ENCODE measurements at regions of chr18 and their contacts with region 1.

Region 1: GRCh38 chr18:74353169-74353775 is 37.6 kb downstream of the C18orf63 start:
- DNase-seq: peak; percentile 77
- H3K4me3 Mint-ChIP-seq: no peak overlapping the region
- H3K27ac Mint-ChIP-seq: no peak overlapping the region
- H3K4me1 Mint-ChIP-seq: peaks cover 6% of the 10 kb centered on the region
- H3K27me3 Mint-ChIP-seq: no peaks in the 10 kb centered on the region

Region 2: GRCh38 chr18:73503326-73503725 is 849.9 kb before region 1 on chr18:
- CTCF ChIA-PET with region 1: no interaction called
- intact Hi-C with region 1: no loop called
- DNase-seq: no peak
- H3K4me3 Mint-ChIP-seq: no peak overlapping the region
- H3K27ac Mint-ChIP-seq: no peak overlapping the region
- H3K4me1 Mint-ChIP-seq: no peaks in the 10 kb centered on the region
- H3K27me3 Mint-ChIP-seq: no peaks in the 10 kb centered on the region

Region 3: DNA sequence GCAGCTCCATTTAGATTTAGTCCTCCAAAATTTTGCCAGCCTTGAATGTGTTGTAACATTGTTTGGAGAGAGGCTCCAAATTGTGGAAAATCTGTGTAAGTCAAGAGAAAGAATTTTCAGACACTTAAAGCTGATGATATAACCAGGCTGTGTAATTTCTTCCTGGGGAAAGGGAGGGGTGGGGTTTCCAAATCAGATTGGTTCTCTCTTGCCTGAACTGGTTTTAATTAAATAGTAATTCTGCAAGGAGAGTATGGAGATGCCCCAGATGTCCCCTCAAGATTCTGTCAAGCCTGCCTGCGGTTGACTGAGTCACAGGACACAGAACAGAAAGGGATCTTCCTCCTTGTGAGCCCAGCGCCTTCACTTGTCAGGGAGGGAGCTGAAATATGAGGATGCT is 16.8 kb after region 1 on chr18:
- CTCF ChIA-PET with region 1: interaction called, 12 read pairs
- intact Hi-C with region 1: loop called (anchors 2 kb)
- DNase-seq: no peak
- H3K4me3 Mint-ChIP-seq: no peak overlapping the region
- H3K27ac Mint-ChIP-seq: no peak overlapping the region
- H3K4me1 Mint-ChIP-seq: peaks cover 46% of the 10 kb centered on the region
- H3K27me3 Mint-ChIP-seq: no peaks in the 10 kb centered on the region

Region 4: DNA sequence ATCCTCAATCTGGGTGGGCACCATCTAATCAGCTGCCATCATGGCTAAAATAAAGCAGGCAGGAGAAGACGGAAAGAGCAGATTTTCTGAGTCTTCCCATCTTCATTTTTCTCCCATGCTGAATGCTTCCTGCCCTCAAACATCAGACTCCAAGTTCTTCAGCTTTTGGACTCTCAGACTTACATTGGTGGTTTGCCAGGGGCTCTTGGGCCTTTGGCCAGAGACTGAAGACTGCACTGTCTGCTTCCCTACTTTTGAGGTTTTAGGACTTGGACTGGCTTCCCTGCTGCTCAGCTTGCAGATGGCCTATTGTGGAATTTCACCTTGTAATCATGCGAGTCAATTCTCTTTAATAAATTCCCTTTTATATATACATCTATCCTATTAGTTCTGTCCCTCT is 67.2 kb after region 1 on chr18:
- CTCF ChIA-PET with region 1: no interaction called
- intact Hi-C with region 1: no loop called
- DNase-seq: no peak
- H3K4me3 Mint-ChIP-seq: no peak overlapping the region
- H3K27ac Mint-ChIP-seq: no peak overlapping the region
- H3K4me1 Mint-ChIP-seq: no peaks in the 10 kb centered on the region
- H3K27me3 Mint-ChIP-seq: no peaks in the 10 kb centered on the region

Measured in activated naive CD4-positive, alpha-beta T cell treated with anti-CD3 and anti-CD28 coated beads for 36 hours (primary cell).